ENCODE measurements at regions of chr1 and their contacts with region 1.

Region 1: GRCh38 chr1:84573967-84574842 is at the start of gene CTBS:
- DNase-seq: peak; percentile 76
- H3K4me3 Mint-ChIP-seq: peak within 1 kb of the TSS; percentile 97
- H3K27ac Mint-ChIP-seq: peak within 1 kb of the TSS; percentile 100
- H3K4me1 Mint-ChIP-seq: peaks cover 50% of the 10 kb centered on the region
- H3K27me3 Mint-ChIP-seq: no peaks in the 10 kb centered on the region
- total RNA-seq, gene CTBS: 14.1 and 15.1 TPM in 2 replicates

Region 2: DNA sequence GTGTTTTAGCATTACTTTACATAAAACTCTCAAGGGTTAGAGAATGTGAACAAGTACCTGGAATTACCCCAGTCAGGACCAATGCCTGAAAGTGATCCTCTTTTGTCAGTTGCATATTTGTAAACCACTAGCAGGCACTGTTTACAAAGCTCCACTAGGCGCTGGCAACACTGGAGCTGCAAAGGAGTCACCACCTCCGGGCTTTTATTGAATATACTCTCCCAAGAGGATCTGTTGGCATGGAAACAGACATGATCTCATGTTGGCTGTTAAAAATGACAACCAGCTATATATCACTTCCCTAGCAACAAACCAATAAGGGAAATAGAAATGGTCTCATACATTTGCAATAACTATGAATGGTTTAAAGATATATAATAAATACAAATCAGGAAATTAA is 691.3 kb before region 1 on chr1:
- intact Hi-C with region 1: no loop called
- DNase-seq: no peak
- H3K4me3 Mint-ChIP-seq: no peak overlapping the region
- H3K27ac Mint-ChIP-seq: no peak overlapping the region
- H3K4me1 Mint-ChIP-seq: no peaks in the 10 kb centered on the region
- H3K27me3 Mint-ChIP-seq: no peaks in the 10 kb centered on the region

Region 3: DNA sequence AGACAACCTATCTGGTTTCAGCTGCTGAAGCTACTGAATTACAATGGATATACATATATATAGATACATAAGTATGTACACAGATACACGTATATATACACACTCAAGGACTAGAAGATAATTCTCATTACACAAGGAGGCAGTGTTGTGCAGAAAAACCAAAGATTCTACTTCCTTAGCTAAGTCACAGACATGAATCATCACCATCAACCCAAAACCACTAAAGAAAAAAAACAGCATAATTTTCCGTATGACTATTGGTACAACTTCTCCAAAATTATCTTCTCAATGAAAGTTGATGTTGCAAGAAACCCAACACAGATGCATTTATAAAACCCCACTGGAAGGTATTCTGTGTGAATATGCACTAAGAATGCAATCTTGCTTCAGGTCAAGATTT is 131.9 kb before region 1 on chr1:
- intact Hi-C with region 1: loop called (anchors 1 kb)
- DNase-seq: no peak
- H3K4me3 Mint-ChIP-seq: no peak overlapping the region
- H3K27ac Mint-ChIP-seq: no peak overlapping the region
- H3K4me1 Mint-ChIP-seq: peaks cover 7% of the 10 kb centered on the region
- H3K27me3 Mint-ChIP-seq: peaks cover 12% of the 10 kb centered on the region

Region 4: DNA sequence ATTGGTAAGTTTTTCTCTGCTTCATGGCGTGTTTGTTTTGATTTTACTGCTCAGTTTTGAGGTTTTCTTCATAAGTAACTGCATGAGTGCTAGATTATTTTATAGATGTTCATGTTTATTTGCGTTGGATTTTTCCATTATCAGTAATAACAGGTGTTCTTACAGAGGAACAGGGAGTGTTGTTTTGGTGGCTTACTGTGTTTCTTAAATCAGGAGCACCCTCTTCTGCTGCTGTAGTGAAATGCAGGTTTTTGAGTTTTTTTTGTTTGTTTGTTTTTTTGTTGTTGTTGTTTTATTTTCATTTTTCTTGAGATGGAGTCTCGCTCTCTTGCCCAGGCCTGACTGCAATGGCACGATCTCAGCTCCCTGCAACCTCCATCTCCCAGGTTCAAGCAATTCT is 32.5 kb before region 1 on chr1:
- intact Hi-C with region 1: loop called (anchors 2 kb)
- DNase-seq: no peak
- H3K4me3 Mint-ChIP-seq: no peak overlapping the region
- H3K27ac Mint-ChIP-seq: no peak overlapping the region
- H3K4me1 Mint-ChIP-seq: peaks cover 27% of the 10 kb centered on the region
- H3K27me3 Mint-ChIP-seq: no peaks in the 10 kb centered on the region

Region 5: GRCh38 chr1:84605157-84605556 is 31.0 kb after region 1 on chr1:
- intact Hi-C with region 1: no loop called
- DNase-seq: no peak
- H3K4me3 Mint-ChIP-seq: no peak overlapping the region
- H3K27ac Mint-ChIP-seq: no peak overlapping the region
- H3K4me1 Mint-ChIP-seq: peaks cover 4% of the 10 kb centered on the region
- H3K27me3 Mint-ChIP-seq: no peaks in the 10 kb centered on the region

Region 6: GRCh38 chr1:84620720-84621313 is 46.6 kb after region 1 on chr1:
- intact Hi-C with region 1: loop called (anchors 1 kb)
- DNase-seq: peak; percentile 77
- H3K4me3 Mint-ChIP-seq: peak overlapping the region; percentile 89
- H3K27ac Mint-ChIP-seq: peak overlapping the region; percentile 88
- H3K4me1 Mint-ChIP-seq: peaks cover 23% of the 10 kb centered on the region
- H3K27me3 Mint-ChIP-seq: peaks cover under 1% of the 10 kb centered on the region

Region 7: GRCh38 chr1:84959294-84959693 is 385.1 kb after region 1 on chr1:
- intact Hi-C with region 1: loop called (anchors 5 kb)
- DNase-seq: peak; percentile 51
- H3K4me3 Mint-ChIP-seq: no peak overlapping the region
- H3K27ac Mint-ChIP-seq: peak overlapping the region; percentile 75
- H3K4me1 Mint-ChIP-seq: peaks cover 36% of the 10 kb centered on the region
- H3K27me3 Mint-ChIP-seq: no peaks in the 10 kb centered on the region

Region 8: DNA sequence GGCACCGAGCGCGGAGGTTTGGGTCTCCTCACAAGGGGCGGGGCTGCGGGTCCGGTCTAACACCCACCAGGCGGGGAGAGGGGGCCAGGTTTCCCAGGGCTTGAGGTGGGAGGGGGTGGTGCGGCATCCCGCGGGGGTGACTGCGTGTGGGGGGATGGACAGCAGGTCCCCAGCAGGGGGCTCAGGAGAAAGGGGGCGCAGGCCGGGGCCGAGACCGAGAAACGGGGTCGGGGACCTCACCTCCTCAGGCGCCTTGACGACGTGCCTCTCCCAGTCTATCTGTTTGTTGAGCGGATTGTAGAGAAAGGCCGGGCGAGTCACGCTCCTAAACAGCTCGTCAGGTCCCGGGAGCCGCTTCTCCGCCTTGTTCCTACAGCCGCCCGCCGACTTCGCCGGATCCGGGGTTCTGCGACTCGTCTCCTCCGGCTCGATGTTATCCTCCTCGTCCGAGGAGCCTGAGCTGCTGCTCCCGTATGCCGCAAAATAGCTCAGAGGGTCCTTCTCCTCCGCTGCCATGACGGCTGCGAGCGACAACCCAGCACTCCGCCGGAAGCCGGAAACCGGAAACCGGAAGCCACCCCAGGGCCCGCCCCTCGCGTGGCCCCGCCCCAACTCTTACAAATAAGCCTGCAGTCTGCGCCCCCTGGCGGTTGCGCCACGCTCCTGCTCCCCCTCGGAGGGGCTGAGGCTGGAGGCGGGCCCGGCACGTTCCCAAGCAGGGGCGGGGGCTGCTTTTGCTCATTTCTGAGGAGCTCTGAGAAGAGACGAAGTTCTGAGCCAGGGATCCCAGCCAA is 685.1 kb after region 1 on chr1 and contains the start of gene C1orf52:
- intact Hi-C with region 1: loop called (anchors 5 kb)
- DNase-seq: peak; percentile 94
- H3K4me3 Mint-ChIP-seq: peak within 1 kb of the TSS; percentile 95
- H3K27ac Mint-ChIP-seq: peak within 1 kb of the TSS; percentile 89
- H3K4me1 Mint-ChIP-seq: peaks cover 23% of the 10 kb centered on the region
- H3K27me3 Mint-ChIP-seq: no peaks in the 10 kb centered on the region
- total RNA-seq, gene C1orf52: 23.9 and 25.8 TPM in 2 replicates